Mammary epithelial cell (primary cell): ENCODE measurements at regions of chr6 and their contacts with region 1.

Region 1: GRCh38 chr6:2791124-2791974 is 26.2 kb downstream of the WRNIP1 start:
- DNase-seq: peak; percentile 82
- H3K4me3 ChIP-seq: no peak overlapping the region
- H3K27ac ChIP-seq: peak overlapping the region; percentile 66
- H3K4me1 ChIP-seq: peaks cover 39% of the 10 kb centered on the region
- H3K27me3 ChIP-seq: no peaks in the 10 kb centered on the region
- CTCF ChIP-seq: peak; percentile 82 to 91

Region 2: DNA sequence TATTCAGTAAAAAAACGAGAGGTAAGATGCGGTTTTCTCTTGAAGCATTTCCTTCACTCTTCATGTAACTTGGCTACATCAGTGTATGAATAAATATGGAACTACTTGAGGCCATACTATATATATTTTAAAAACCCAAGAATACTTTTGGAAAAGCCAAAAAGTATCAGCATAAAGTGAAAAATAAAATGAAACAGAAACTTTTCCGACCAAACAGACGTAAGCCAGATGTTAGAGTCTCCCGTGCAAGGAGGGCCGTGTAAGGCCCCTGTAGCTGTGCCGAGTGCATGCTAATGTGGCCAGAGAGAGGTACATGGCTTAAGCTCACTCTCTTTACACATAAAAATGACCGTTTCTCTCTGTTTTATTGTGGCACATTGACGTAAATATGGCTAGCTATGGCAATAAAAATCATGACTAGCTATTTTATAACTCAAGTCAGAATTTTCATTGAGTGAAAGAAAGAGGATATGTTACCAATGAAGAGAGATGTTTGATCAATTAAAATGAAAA is 405.8 kb before region 1 on chr6:
- CTCF ChIA-PET with region 1: no interaction called
- dilution Hi-C with region 1: no loop called
- in situ Hi-C with region 1: no loop called
- intact Hi-C with region 1: no loop called
- DNase-seq: no peak
- H3K4me3 ChIP-seq: no peak overlapping the region
- H3K27ac ChIP-seq: no peak overlapping the region
- H3K4me1 ChIP-seq: no peaks in the 10 kb centered on the region
- H3K27me3 ChIP-seq: no peaks in the 10 kb centered on the region
- CTCF ChIP-seq: no peak

Region 3: DNA sequence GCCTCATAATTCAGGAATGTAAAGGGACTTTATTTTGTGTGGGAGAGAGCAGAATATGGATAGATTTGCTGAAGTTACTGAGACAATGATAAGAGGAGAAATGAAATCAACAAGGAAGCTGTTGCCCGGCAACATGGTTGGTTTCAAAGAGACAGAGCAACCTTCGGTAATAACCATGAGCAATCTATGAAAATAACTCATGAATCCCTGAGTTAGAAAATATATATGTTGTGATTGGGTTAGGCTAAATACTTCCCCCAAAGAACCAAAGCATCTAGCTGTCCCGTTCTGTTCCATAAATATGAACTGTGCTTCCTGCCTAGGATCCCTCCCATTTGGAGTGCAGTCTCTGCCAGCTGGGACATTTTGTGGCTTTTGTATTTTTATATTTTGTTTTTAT is 27.2 kb after region 1 on chr6:
- CTCF ChIA-PET with region 1: no interaction called
- dilution Hi-C with region 1: no loop called
- in situ Hi-C with region 1: no loop called
- intact Hi-C with region 1: loop called (anchors 1 kb)
- DNase-seq: peak; percentile 84
- H3K4me3 ChIP-seq: peak overlapping the region in 1 of 3 experiments; percentile 6
- H3K27ac ChIP-seq: peak overlapping the region; percentile 99
- H3K4me1 ChIP-seq: peaks cover 26% of the 10 kb centered on the region
- H3K27me3 ChIP-seq: no peaks in the 10 kb centered on the region
- CTCF ChIP-seq: no peak

Region 4: DNA sequence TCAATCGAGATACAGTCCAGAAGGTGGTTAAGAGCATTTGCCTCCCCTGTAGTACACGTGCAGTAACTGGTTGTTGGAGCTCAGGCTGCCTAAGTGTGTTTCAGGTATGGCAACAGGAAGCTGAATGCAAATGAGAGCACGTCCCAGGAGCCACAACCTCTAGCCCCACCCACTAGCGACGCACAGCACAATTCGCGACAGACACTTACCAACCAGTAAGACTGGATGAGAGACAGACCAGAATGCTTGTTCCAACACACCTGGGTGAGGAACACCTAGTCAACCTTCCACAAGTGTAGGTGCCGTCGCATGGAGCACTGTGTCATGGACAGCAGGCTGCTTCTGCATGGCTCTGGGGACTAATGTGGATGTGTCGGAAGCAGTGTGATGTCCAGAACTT is 57.5 kb after region 1 on chr6:
- CTCF ChIA-PET with region 1: interaction called, 19 read pairs
- dilution Hi-C with region 1: loop called (anchors 10 kb)
- in situ Hi-C with region 1: loop called (anchors 5 kb)
- intact Hi-C with region 1: loop called (anchors 1 kb)
- DNase-seq: no peak
- H3K4me3 ChIP-seq: no peak overlapping the region
- H3K27ac ChIP-seq: no peak overlapping the region
- H3K4me1 ChIP-seq: peaks cover 11% of the 10 kb centered on the region
- H3K27me3 ChIP-seq: no peaks in the 10 kb centered on the region
- CTCF ChIP-seq: no peak

Region 5: GRCh38 chr6:2891768-2892170 is 100.4 kb after region 1 on chr6:
- CTCF ChIA-PET with region 1: no interaction called
- dilution Hi-C with region 1: loop called (anchors 5 kb)
- in situ Hi-C with region 1: no loop called
- intact Hi-C with region 1: no loop called
- DNase-seq: no peak
- H3K4me3 ChIP-seq: no peak overlapping the region
- H3K27ac ChIP-seq: no peak overlapping the region
- H3K4me1 ChIP-seq: no peaks in the 10 kb centered on the region
- H3K27me3 ChIP-seq: peaks cover 3% of the 10 kb centered on the region
- CTCF ChIP-seq: no peak

Region 6: DNA sequence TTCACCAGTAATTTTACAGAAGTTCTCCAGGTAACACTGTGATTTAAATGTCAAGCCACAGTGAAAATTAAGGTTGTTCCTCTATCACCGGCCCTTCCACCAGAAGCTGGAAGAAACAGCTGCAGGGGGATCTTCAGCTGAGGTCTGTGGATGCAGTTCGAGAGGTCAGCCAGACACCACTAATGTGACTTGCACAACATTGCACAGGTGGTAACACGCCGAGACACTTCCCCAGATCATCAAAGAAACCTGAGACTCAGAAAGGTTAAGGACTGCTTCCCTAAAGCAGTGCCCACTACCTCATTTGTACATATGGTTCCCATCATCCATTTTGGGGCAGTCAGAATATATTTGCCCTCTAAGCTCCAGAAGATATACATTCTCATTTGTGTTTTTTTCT is 119.8 kb after region 1 on chr6:
- CTCF ChIA-PET with region 1: interaction called, 6 read pairs
- dilution Hi-C with region 1: no loop called
- in situ Hi-C with region 1: loop called in 1 of 2 experiments (anchors 25 kb)
- intact Hi-C with region 1: loop called (anchors 1 kb)
- DNase-seq: peak; percentile 25
- H3K4me3 ChIP-seq: no peak overlapping the region
- H3K27ac ChIP-seq: no peak overlapping the region
- H3K4me1 ChIP-seq: peaks cover 6% of the 10 kb centered on the region
- H3K27me3 ChIP-seq: no peaks in the 10 kb centered on the region
- CTCF ChIP-seq: no peak

Region 7: GRCh38 chr6:2952557-2953095 is 161.3 kb after region 1 on chr6:
- CTCF ChIA-PET with region 1: no interaction called
- dilution Hi-C with region 1: loop called (anchors 5 kb)
- in situ Hi-C with region 1: no loop called
- intact Hi-C with region 1: no loop called
- DNase-seq: peak; percentile 59
- H3K4me3 ChIP-seq: no peak overlapping the region
- H3K27ac ChIP-seq: no peak overlapping the region
- H3K4me1 ChIP-seq: no peaks in the 10 kb centered on the region
- H3K27me3 ChIP-seq: no peaks in the 10 kb centered on the region
- CTCF ChIP-seq: peak; percentile 79 to 93

Region 8: DNA sequence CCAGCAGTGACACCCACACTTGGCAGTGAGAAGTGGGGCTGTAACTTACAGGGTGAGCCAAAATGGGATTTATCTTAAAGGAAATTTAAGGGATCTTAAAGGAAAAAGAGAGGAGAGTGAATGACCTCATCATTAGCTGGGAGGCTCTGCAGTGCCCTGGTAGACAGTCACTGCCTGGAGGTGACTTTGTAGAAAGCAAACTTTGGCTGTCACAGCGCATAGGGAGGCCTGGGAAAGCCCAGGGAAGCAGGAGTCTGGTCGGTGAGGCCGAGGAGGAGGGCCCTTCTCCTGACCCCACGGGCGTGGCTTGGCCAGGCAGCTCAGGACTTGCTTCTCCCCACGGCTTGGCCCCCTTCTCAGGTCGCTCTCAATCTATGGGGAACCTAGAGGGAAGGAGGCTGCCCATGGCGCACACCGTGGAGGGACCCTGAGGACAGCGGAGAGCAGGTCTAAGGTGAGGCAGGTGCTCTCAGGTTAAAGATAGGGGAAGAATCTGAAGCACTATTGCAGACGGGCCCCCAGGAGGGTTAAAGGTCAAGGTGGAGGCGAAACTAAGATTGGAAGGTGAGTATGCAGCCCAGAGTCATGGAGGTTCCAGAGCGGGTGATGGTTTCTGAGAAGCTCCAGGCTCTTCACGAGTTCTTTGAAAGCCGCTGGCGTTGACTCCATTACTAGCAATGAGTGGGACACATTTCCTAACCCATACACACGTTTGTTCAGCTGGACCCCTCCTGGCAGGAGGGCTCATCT is 261.3 kb after region 1 on chr6:
- CTCF ChIA-PET with region 1: no interaction called
- dilution Hi-C with region 1: no loop called
- in situ Hi-C with region 1: no loop called
- intact Hi-C with region 1: loop called (anchors 5 kb)
- DNase-seq: no peak
- H3K4me3 ChIP-seq: no peak overlapping the region
- H3K27ac ChIP-seq: no peak overlapping the region
- H3K4me1 ChIP-seq: no peaks in the 10 kb centered on the region
- H3K27me3 ChIP-seq: no peaks in the 10 kb centered on the region
- CTCF ChIP-seq: no peak